Astrocyte of the cerebellum (primary cell): ENCODE measurements at regions of chr3 and their contacts with region 1.

Region 1: GRCh38 chr3:52570076-52570475 is 33.7 kb downstream of the UQCC5 start:
- DNase-seq: no peak
- H3K4me3 ChIP-seq: no peak overlapping the region
- CTCF ChIP-seq: no peak

Region 2: GRCh38 chr3:52471371-52472238 is 98.5 kb before region 1 on chr3:
- in situ Hi-C with region 1: loop called (anchors 5 kb)
- DNase-seq: no peak
- H3K4me3 ChIP-seq: no peak overlapping the region
- CTCF ChIP-seq: peak; percentile 64

Region 3: GRCh38 chr3:52536369-52537164 is 33.5 kb before region 1 on chr3 and contains the start of gene UQCC5:
- in situ Hi-C with region 1: loop called (anchors 5 kb)
- DNase-seq: peak; percentile 96
- H3K4me3 ChIP-seq: peak within 1 kb of the TSS; percentile 94
- CTCF ChIP-seq: no peak

Region 4: DNA sequence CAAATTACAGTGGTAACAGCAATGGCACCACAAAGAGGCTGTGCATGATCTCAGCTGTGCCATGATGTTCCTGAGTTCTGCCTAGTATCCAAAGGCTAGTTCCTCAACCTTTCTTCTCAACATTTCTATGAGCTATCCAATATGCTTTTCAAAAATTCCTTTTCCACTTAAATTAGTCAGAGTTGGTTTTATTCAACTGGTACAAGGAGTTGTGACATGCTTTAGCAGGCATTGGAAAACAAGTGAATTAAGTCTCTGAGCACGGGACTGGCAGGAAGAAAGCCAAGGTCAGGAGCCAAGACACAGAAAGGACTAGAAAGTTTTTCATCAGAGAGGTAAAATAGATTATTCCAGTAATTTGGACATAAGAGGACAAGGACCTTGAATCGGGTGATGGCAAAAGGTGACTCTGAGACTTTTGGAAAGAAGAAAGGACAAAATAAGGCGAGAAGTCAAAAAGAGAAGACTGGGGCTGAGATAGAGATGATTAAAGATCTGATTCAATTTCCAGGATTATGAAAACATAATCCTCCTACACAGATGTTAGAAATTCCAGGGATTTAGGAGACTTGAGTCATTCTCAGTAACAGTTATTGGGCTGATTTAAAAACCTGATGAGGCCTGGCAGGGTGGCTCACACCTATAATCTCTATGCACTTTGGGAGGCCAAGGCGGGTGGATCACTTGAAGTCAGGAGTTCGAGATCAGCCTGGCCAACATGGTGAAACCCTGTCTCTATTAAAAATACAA is 79.6 kb after region 1 on chr3:
- in situ Hi-C with region 1: no loop called
- DNase-seq: no peak
- H3K4me3 ChIP-seq: no peak overlapping the region
- CTCF ChIP-seq: no peak